ENCODE measurements at regions of chr11 and their contacts with region 1.

Region 1: DNA sequence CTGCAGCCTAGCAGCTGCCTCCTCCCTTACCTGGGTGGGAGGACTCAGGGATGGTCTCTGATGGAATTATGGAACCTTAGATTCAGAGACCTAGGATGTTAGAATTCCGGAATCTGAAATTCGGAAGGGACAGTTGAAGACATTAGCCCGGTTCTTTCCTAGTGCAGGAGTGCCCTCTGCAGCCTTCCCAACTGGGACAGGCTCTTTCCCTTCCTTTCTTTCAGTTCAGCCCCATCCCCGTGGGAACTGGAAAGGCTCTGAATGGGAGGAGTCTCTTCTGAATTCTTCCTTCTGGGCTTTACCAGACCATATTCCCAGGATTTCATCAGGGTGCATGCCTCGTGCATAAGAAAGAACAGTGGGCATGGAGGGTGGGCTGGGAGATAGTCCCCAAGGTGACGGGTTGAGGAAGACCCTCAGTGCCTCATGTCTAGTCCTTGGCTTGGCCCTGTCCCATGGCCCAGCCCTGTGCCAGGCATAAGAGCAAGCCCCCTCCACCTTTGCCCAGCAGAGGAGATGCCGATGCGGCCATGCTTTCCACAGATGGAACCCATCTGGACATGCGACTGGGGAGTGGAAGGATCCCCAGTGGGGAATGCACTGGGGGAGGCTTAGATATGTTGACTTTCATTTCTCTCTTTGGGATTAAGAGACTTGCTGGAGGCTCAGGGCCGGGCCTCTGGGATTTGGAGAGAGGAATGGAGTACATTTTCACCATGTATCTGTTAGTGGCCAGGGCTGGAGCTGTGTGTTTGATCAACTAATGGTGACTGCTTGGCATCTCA is 14.4 kb downstream of the DNAJB13 start:
- DNase-seq: no peak
- H3K4me3 ChIP-seq: no peak overlapping the region
- H3K27ac ChIP-seq: no peak overlapping the region
- H3K4me1 ChIP-seq: no peaks in the 10 kb centered on the region
- H3K27me3 ChIP-seq: peaks cover 0 to 2% of the 10 kb centered on the region in 2 experiments
- CTCF ChIP-seq: no peak
- POLR2A ChIP-seq: no peak

Region 2: DNA sequence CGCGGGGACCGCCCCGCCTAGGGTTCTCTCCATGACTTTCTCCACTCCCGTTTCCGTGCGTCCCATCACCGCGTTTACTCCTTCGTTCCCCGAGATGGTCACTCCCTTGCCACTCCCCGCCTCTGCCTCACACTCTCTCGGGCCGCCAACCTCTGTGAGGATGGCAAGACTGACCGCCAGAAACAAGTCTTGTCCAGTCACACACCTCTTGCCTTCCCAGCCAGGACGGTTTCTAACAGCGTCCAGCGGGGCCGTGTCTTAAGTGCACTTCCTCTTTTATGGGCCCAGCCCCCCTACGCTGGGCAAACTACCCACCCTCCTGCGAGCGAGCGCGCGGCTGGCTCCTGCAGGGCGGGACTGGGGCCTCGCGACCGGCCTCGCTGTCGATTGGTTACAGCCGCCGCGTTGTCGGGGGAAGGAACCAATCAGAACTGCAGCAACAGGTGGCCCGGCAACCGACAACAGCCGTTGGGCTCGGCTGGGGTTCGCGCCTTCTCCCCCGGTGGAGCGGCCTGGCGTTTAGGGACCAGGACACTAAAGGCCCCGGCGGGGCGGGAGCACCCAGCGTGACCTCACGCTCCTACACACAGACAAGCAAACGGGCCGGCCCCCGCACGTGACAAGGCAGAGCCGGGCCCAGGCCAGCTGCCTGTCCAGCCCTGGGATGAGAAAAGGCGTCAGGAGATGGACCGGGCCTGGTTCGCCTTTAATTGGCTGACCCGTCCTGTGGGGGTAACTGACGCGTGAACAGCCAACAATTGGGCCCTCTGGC is 17.9 kb after region 1 on chr11:
- CTCF ChIA-PET with region 1: interaction called, 14 read pairs
- POLR2A ChIA-PET with region 1: interaction called, 4 read pairs
- dilution Hi-C with region 1: no loop called
- intact Hi-C with region 1: loop called (anchors 2 kb)
- DNase-seq: peak; percentile 96
- H3K4me3 ChIP-seq: peak overlapping the region; percentile 11 to 73 (median 56)
- H3K27ac ChIP-seq: peak overlapping the region; percentile 71
- H3K4me1 ChIP-seq: peaks cover 11% of the 10 kb centered on the region
- H3K27me3 ChIP-seq: no peaks in the 10 kb centered on the region
- CTCF ChIP-seq: no peak
- POLR2A ChIP-seq: peak; percentile 84

Region 3: DNA sequence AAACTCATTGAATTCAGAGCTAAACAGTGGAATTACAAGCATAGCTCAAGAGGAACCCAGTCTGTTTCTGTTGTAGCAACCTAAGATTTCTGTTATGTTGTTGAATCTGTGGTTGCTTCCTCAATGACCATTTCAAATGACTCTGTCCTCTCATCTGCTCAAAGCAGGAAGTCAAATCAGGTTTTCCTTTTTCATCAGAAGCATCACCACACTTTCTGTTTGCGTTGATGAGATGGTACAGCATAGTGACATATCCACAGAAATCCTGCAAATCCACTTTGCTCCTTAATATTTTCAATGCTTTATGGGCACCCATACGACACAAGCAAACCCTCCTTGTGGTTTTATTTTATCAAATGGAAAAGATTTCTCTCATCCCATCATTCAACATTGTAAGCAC is 30.0 kb after region 1 on chr11:
- CTCF ChIA-PET with region 1: no interaction called
- POLR2A ChIA-PET with region 1: no interaction called
- dilution Hi-C with region 1: no loop called
- intact Hi-C with region 1: no loop called
- DNase-seq: peak; percentile 18
- H3K4me3 ChIP-seq: no peak overlapping the region
- H3K27ac ChIP-seq: no peak overlapping the region
- H3K4me1 ChIP-seq: no peaks in the 10 kb centered on the region
- H3K27me3 ChIP-seq: peaks cover 0 to 3% of the 10 kb centered on the region in 2 experiments
- CTCF ChIP-seq: no peak
- POLR2A ChIP-seq: no peak

Region 4: GRCh38 chr11:74090701-74091100 is 125.4 kb after region 1 on chr11:
- CTCF ChIA-PET with region 1: no interaction called
- POLR2A ChIA-PET with region 1: no interaction called
- dilution Hi-C with region 1: no loop called
- intact Hi-C with region 1: loop called (anchors 10 kb)
- DNase-seq: no peak
- H3K4me3 ChIP-seq: no peak overlapping the region
- H3K27ac ChIP-seq: no peak overlapping the region
- H3K4me1 ChIP-seq: no peaks in the 10 kb centered on the region
- H3K27me3 ChIP-seq: no peaks in the 10 kb centered on the region
- CTCF ChIP-seq: no peak
- POLR2A ChIP-seq: no peak

Region 5: GRCh38 chr11:74170694-74171629 is 205.7 kb after region 1 on chr11 and contains the starts of genes C2CD3 and PPME1:
- CTCF ChIA-PET with region 1: interaction called, 3 read pairs
- POLR2A ChIA-PET with region 1: no interaction called
- dilution Hi-C with region 1: no loop called
- intact Hi-C with region 1: loop called (anchors 1 kb)
- DNase-seq: peak; percentile 100
- H3K4me3 ChIP-seq: peak within 1 kb of the TSS; percentile 67 to 93 (median 74)
- H3K27ac ChIP-seq: peak within 1 kb of the TSS; percentile 84
- H3K4me1 ChIP-seq: peaks cover 17% of the 10 kb centered on the region
- H3K27me3 ChIP-seq: no peaks in the 10 kb centered on the region
- CTCF ChIP-seq: peak in 1 of 2 donors; percentile 5
- POLR2A ChIP-seq: no peak
- total RNA-seq, gene C2CD3: 26.2 and 36.6 TPM in 2 replicates
- total RNA-seq, gene PPME1: 35.0 and 37.2 TPM in 2 replicates

Region 6: DNA sequence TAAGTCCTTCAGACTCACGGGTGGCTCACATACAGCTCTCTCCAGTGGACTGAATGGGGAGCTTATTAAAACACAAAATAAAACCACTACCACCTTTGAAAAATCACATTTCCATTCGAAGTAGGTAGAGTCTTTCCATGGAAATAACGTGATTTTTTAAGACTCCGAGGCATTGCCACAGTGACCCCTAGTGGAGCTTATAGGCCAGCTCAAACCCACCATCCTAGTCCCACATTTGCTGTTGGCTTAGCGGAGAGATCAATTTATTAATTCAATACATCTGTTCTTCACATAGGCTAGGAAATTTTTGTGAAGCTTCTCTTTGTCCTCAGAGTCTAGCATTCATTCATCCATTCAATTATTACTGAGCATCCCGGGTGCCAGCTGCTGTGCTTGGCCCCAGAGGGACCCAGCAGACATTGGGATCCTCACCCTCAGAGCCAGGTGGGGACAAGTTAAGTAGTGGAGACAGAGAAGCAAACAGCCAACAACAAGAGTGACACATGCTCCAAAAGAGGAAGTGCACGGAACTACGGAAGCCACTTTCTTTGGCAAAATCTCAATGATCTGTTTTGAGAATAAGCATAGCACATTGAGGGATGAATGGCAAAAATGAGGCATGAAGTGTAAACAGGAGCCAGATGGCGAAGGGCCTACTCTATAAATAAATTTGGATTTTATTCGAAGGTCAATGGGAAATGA is 356.4 kb after region 1 on chr11:
- CTCF ChIA-PET with region 1: interaction called, 4 read pairs
- POLR2A ChIA-PET with region 1: no interaction called
- dilution Hi-C with region 1: no loop called
- intact Hi-C with region 1: loop called (anchors 1 kb)
- DNase-seq: peak; percentile 99
- H3K4me3 ChIP-seq: no peak overlapping the region
- H3K27ac ChIP-seq: peak overlapping the region; percentile 87
- H3K4me1 ChIP-seq: peaks cover 60% of the 10 kb centered on the region
- H3K27me3 ChIP-seq: no peaks in the 10 kb centered on the region
- CTCF ChIP-seq: peak; percentile 65 to 74
- POLR2A ChIP-seq: peak; percentile 16

Region 7: DNA sequence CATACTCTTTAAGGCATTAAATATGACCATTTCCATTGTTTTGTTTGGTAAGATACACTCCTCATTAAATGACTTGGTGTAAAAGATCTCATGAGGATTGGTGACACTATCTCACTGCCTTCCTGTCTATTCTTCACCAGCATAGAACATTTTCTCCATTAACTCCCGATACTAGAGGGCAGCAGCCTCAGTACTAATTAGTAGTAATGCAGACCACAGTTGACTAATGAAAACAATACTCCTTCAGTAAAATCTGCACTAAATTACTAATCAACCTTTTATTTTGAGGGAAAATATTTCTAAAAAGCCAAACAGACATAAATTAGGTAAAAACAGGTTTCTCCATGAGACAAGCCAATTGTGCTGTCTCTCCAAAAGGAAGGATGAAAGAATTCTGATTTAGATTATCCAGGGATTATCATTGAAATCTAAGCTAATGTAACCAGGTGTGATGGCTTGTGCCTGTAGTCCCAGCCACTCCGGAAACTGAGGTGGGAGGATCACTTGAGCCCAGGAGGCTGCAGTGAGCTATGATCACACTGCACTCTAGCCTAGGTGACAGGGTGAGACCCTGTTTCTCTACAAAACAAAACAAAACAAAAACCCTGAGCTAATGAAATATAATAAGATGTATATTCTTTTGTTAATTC is 423.5 kb after region 1 on chr11:
- CTCF ChIA-PET with region 1: no interaction called
- POLR2A ChIA-PET with region 1: no interaction called
- dilution Hi-C with region 1: no loop called
- intact Hi-C with region 1: loop called (anchors 5 kb)
- DNase-seq: peak; percentile 70
- H3K4me3 ChIP-seq: no peak overlapping the region
- H3K27ac ChIP-seq: peak overlapping the region; percentile 17
- H3K4me1 ChIP-seq: peaks cover 5% of the 10 kb centered on the region
- H3K27me3 ChIP-seq: no peaks in the 10 kb centered on the region
- CTCF ChIP-seq: peak; percentile 37 to 57
- POLR2A ChIP-seq: no peak

Region 8: GRCh38 chr11:74570266-74571061 is 605.2 kb after region 1 on chr11:
- CTCF ChIA-PET with region 1: no interaction called
- POLR2A ChIA-PET with region 1: no interaction called
- dilution Hi-C with region 1: no loop called
- intact Hi-C with region 1: loop called (anchors 5 kb)
- DNase-seq: peak; percentile 71
- H3K4me3 ChIP-seq: no peak overlapping the region
- H3K27ac ChIP-seq: no peak overlapping the region
- H3K4me1 ChIP-seq: no peaks in the 10 kb centered on the region
- H3K27me3 ChIP-seq: peaks cover 4 to 9% of the 10 kb centered on the region in 2 experiments
- CTCF ChIP-seq: peak; percentile 56 to 74
- POLR2A ChIP-seq: no peak

Measured in endothelial cell of umbilical vein (primary cell).